Caco-2 (cell line): ENCODE measurements at regions of chr2 and their contacts with region 1.

Region 1: GRCh38 chr2:147416099-147416498 is 428.7 kb upstream of the ACVR2A start:
- DNase-seq: peak in 1 of 2 experiments; percentile 60
- H3K4me3 ChIP-seq: no peak overlapping the region
- H3K4me3 Mint-ChIP-seq: peak overlapping the region; percentile 54
- H3K27ac Mint-ChIP-seq: peak overlapping the region; percentile 92
- H3K4me1 ChIP-seq: peaks cover 37% of the 10 kb centered on the region
- H3K4me1 Mint-ChIP-seq: peaks cover 48% of the 10 kb centered on the region
- H3K27me3 ChIP-seq: no peaks in the 10 kb centered on the region
- H3K27me3 Mint-ChIP-seq: no peaks in the 10 kb centered on the region
- CTCF ChIP-seq: no peak

Region 2: GRCh38 chr2:147398996-147399395 is 17.1 kb before region 1 on chr2:
- CTCF ChIA-PET with region 1: no interaction called
- POLR2A ChIA-PET with region 1: no interaction called
- intact Hi-C with region 1: loop called (anchors 1 kb)
- DNase-seq: peak; percentile 42 to 58
- H3K4me3 ChIP-seq: no peak overlapping the region
- H3K4me3 Mint-ChIP-seq: no peak overlapping the region
- H3K27ac Mint-ChIP-seq: no peak overlapping the region
- H3K4me1 ChIP-seq: peaks cover 17% of the 10 kb centered on the region
- H3K4me1 Mint-ChIP-seq: peaks cover 6% of the 10 kb centered on the region
- H3K27me3 ChIP-seq: no peaks in the 10 kb centered on the region
- H3K27me3 Mint-ChIP-seq: no peaks in the 10 kb centered on the region
- CTCF ChIP-seq: no peak

Region 3: DNA sequence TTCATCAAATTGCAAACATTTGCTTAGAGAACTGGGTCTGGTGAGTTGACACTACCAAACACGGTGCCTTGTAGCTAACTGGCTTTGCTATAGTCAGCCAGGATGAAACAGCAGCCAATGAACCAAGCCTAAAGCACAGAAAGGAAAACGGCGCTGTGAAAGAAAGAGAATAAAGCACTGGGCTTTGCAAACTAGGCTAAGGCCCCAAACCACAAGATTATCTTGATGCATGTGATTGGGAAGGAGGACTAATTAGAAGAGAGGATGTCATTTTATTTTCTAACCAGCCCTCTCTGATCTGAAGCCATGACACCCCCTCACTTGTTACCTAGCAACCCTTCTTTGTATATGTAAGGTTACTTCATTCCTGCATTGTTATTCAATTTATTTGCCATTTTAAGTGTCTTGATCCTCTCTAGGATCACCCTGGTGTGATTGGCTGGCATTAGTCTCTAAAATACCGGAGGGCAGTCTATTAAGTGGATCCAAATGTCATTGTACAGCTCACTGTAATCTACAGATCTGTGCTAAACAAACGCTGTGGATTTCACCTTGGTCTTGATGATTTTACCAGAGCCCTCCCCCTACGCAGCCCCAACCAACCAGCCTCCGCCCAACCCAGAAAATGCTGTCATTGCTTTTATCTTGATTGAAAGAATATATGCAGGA is 33.4 kb after region 1 on chr2:
- CTCF ChIA-PET with region 1: no interaction called
- POLR2A ChIA-PET with region 1: no interaction called
- intact Hi-C with region 1: loop called (anchors 1 kb)
- DNase-seq: peak; percentile 39 to 46
- H3K4me3 ChIP-seq: no peak overlapping the region
- H3K4me3 Mint-ChIP-seq: peak overlapping the region; percentile 37
- H3K27ac Mint-ChIP-seq: peak overlapping the region; percentile 63
- H3K4me1 ChIP-seq: peaks cover 14% of the 10 kb centered on the region
- H3K4me1 Mint-ChIP-seq: peaks cover 16% of the 10 kb centered on the region
- H3K27me3 ChIP-seq: no peaks in the 10 kb centered on the region
- H3K27me3 Mint-ChIP-seq: no peaks in the 10 kb centered on the region
- CTCF ChIP-seq: no peak

Region 4: DNA sequence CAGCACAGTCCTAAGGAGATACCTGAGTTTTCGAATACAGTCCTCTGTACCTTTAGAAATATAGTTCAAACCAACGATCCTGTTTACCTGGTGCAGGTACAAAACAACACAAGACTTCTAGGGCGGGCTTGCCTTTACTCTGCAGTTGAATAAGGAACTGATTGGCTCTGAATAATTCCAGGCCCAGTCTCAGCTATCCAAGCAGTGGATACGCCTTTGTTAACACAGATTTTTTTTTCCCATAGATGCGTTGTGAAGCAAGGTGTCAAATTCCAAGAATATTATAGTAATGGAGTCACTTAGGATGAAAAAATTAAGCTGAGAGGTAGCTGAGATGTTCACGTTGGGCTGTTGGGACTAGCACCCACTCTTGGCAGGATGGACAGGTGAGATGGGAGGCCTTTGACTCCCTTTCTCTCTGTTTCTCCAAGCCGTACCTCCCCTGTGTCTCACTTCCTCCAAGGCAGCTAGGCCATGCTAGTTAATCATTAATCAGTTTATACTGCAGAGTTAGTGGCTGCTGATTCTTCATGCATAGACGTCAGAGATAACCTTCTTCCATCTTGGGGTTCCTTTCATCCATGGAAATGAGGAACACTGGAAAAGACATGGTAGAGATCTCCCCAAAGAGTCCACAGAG is 47.9 kb after region 1 on chr2:
- CTCF ChIA-PET with region 1: no interaction called
- POLR2A ChIA-PET with region 1: no interaction called
- intact Hi-C with region 1: loop called (anchors 1 kb)
- DNase-seq: peak; percentile 45 to 51
- H3K4me3 ChIP-seq: no peak overlapping the region
- H3K4me3 Mint-ChIP-seq: no peak overlapping the region
- H3K27ac Mint-ChIP-seq: peak overlapping the region; percentile 46
- H3K4me1 ChIP-seq: peaks cover 18% of the 10 kb centered on the region
- H3K4me1 Mint-ChIP-seq: no peaks in the 10 kb centered on the region
- H3K27me3 ChIP-seq: no peaks in the 10 kb centered on the region
- H3K27me3 Mint-ChIP-seq: no peaks in the 10 kb centered on the region
- CTCF ChIP-seq: no peak

Region 5: DNA sequence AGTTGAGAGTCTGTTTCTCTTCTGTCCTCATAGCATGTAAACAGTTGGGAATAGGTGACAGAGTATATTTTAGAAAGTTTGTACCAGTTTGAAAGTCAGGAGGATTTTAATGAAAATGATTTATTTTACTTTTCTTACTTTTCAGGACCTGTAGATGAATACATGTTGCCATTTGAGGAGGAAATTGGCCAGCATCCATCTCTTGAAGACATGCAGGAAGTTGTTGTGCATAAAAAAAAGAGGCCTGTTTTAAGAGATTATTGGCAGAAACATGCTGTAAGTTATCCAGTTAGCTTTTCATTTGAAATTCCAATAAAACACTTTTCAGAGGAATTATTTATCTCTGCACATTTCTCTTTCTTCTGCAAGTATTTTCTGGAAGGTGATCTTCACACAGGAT is 509.8 kb after region 1 on chr2:
- CTCF ChIA-PET with region 1: no interaction called
- POLR2A ChIA-PET with region 1: no interaction called
- intact Hi-C with region 1: loop called (anchors 1 kb)
- DNase-seq: no peak
- H3K4me3 ChIP-seq: no peak overlapping the region
- H3K4me3 Mint-ChIP-seq: peak overlapping the region; percentile 8
- H3K27ac Mint-ChIP-seq: peak overlapping the region; percentile 82
- H3K4me1 ChIP-seq: peaks cover 37% of the 10 kb centered on the region
- H3K4me1 Mint-ChIP-seq: peaks cover 16% of the 10 kb centered on the region
- H3K27me3 ChIP-seq: no peaks in the 10 kb centered on the region
- H3K27me3 Mint-ChIP-seq: no peaks in the 10 kb centered on the region
- CTCF ChIP-seq: no peak